CD8-positive, alpha-beta memory T cell (primary cell): ENCODE measurements at regions of chr14 and their contacts with region 1.

Region 1: GRCh38 chr14:64503478-64504309 is at the start of gene ZBTB25:
- DNase-seq: peak; percentile 98 to 99 (median 98)
- H3K4me3 ChIP-seq: peak within 1 kb of the TSS; percentile 82
- H3K4me3 Mint-ChIP-seq: peak within 1 kb of the TSS; percentile 94 to 99 (median 95)
- H3K27ac ChIP-seq: peak within 1 kb of the TSS; percentile 99
- H3K27ac Mint-ChIP-seq: peak within 1 kb of the TSS; percentile 97 to 100 (median 100)
- H3K4me1 ChIP-seq: peaks cover 58% of the 10 kb centered on the region
- H3K4me1 Mint-ChIP-seq: peaks cover 65 to 78% (median 68%) of the 10 kb centered on the region in 3 donors
- H3K27me3 ChIP-seq: no peaks in the 10 kb centered on the region
- H3K27me3 Mint-ChIP-seq: peaks cover 0 to 4% of the 10 kb centered on the region in 2 donors
- total RNA-seq, gene ZBTB25: 21.7 to 22.9 TPM

Region 2: GRCh38 chr14:63361790-63362189 is 1141.9 kb before region 1 on chr14:
- CTCF ChIA-PET with region 1: no interaction called
- POLR2A ChIA-PET with region 1: no interaction called
- DNase-seq: no peak
- H3K4me3 ChIP-seq: no peak overlapping the region
- H3K4me3 Mint-ChIP-seq: no peak overlapping the region
- H3K27ac ChIP-seq: no peak overlapping the region
- H3K27ac Mint-ChIP-seq: no peak overlapping the region
- H3K4me1 ChIP-seq: no peaks in the 10 kb centered on the region
- H3K4me1 Mint-ChIP-seq: no peaks in the 10 kb centered on the region
- H3K27me3 ChIP-seq: no peaks in the 10 kb centered on the region
- H3K27me3 Mint-ChIP-seq: peaks cover 3 to 9% of the 10 kb centered on the region in 2 donors

Region 3: GRCh38 chr14:63852817-63853731 is 650.6 kb before region 1 on chr14 and contains the start of gene SYNE2:
- CTCF ChIA-PET with region 1: no interaction called
- POLR2A ChIA-PET with region 1: interaction called, 18 read pairs
- DNase-seq: peak; percentile 75 to 85 (median 76)
- H3K4me3 ChIP-seq: peak within 1 kb of the TSS; percentile 82
- H3K4me3 Mint-ChIP-seq: peak within 1 kb of the TSS; percentile 93 to 100 (median 99)
- H3K27ac ChIP-seq: peak within 1 kb of the TSS; percentile 73
- H3K27ac Mint-ChIP-seq: peak within 1 kb of the TSS; percentile 92 to 99 (median 96)
- H3K4me1 ChIP-seq: peaks cover 43% of the 10 kb centered on the region
- H3K4me1 Mint-ChIP-seq: peaks cover 40 to 48% (median 41%) of the 10 kb centered on the region in 3 donors
- H3K27me3 ChIP-seq: no peaks in the 10 kb centered on the region
- H3K27me3 Mint-ChIP-seq: peaks cover 0 to 1% of the 10 kb centered on the region in 2 donors
- total RNA-seq, gene SYNE2: 45.2 to 45.6 TPM

Region 4: DNA sequence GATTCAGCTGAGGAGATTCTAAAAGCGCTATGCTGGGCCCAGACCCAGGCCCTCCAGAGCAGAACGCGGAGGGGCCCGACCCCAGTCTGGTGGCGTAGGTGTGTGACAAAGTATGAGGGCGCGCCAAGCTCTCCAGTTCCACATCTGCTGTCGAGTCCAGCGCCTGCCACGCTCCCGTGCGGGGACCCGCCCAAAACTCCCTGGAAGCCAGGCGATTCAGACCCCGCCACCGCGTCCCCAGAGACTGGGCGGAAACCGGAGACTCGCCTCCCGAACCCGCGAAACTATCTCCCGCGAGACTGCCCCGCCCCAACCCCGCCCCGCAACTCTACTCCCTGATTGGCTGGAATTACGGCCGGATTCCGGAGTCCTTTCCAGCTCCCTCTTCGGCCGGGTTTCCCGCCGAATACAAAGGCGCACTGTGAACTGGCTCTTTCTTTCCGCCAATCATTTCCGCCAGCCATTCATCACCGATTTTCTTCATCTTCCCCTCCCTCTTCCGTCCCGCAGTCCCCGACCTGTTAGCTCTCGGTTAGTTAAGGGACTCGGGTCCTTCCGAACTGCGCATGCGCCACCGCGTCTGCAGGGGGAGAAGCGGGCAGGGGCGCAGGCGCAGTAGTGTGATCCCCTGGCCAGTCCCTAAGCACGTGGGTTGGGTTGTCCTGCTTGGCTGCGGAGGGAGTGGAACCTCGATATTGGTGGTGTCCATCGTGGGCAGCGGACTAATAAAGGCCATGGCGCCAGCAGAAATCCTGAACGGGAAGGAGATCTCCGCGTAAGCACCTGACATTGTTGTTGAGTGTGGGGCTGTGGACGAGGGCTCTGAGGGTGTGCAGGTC is 115.8 kb before region 1 on chr14 and contains the start of gene MTHFD1:
- CTCF ChIA-PET with region 1: interaction called, 5 read pairs
- POLR2A ChIA-PET with region 1: interaction called, 12 read pairs
- DNase-seq: peak; percentile 93 to 98 (median 95)
- H3K4me3 ChIP-seq: peak within 1 kb of the TSS; percentile 96
- H3K4me3 Mint-ChIP-seq: peak within 1 kb of the TSS; percentile 93 to 97 (median 94)
- H3K27ac ChIP-seq: peak within 1 kb of the TSS; percentile 65
- H3K27ac Mint-ChIP-seq: peak within 1 kb of the TSS; percentile 76 to 97 (median 93)
- H3K4me1 ChIP-seq: peaks cover 18% of the 10 kb centered on the region
- H3K4me1 Mint-ChIP-seq: peaks cover 34 to 55% (median 53%) of the 10 kb centered on the region in 3 donors
- H3K27me3 ChIP-seq: no peaks in the 10 kb centered on the region
- H3K27me3 Mint-ChIP-seq: peaks cover 0 to 1% of the 10 kb centered on the region in 2 donors
- total RNA-seq, gene MTHFD1: 247 to 256 TPM

Region 5: DNA sequence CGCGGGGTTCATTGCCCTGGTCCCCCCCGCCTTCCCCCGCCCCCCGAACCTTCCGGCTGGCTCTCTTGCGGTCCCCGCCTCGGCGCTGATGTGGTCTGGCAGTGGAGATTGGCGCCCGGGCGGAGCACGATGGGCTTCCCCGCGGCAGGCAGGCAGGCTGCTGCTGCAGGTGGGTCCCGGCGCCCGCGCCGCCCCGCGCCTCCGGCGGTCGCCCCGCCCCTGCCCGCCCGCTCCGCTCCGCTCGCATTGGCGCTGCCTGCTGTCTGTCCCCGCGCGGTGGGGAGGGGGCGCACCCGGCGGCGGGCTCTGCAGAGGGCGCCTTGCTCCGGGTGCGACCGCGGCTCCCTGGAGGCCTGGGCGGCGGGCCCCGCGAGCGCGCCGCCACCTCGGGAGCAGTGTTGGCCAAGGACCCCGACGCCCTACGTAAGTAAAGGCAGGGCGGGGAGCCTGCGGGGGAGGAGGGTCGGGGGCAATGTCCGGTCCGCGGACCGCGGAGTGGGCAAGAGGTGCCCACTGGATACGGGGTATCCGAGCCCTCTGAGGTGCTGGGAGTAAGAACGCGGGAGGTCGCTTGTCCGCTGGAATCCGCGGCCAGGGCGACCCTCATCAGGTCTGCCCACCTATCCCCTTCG is 38.4 kb before region 1 on chr14 and contains the start of gene AKAP5:
- CTCF ChIA-PET with region 1: no interaction called
- POLR2A ChIA-PET with region 1: interaction called, 15 read pairs
- DNase-seq: peak; percentile 62 to 78 (median 66)
- H3K4me3 ChIP-seq: peak within 1 kb of the TSS; percentile 49
- H3K4me3 Mint-ChIP-seq: peak within 1 kb of the TSS; percentile 88 to 96 (median 91)
- H3K27ac ChIP-seq: no peak within 1 kb of the TSS
- H3K27ac Mint-ChIP-seq: peak within 1 kb of the TSS; percentile 46 to 92 (median 86)
- H3K4me1 ChIP-seq: peaks cover 10% of the 10 kb centered on the region
- H3K4me1 Mint-ChIP-seq: peaks cover 31 to 56% (median 51%) of the 10 kb centered on the region in 3 donors
- H3K27me3 ChIP-seq: no peaks in the 10 kb centered on the region
- H3K27me3 Mint-ChIP-seq: no peaks in the 10 kb centered on the region
- total RNA-seq, gene AKAP5: 3.1 to 3.6 TPM

Region 6: GRCh38 chr14:64540208-64541157 is 36.8 kb after region 1 on chr14 and contains the start of gene HSPA2:
- CTCF ChIA-PET with region 1: interaction called, 11 read pairs
- POLR2A ChIA-PET with region 1: interaction called, 4 read pairs
- DNase-seq: peak; percentile 89 to 94 (median 90)
- H3K4me3 ChIP-seq: peak within 1 kb of the TSS; percentile 92
- H3K4me3 Mint-ChIP-seq: peak within 1 kb of the TSS; percentile 92 to 99 (median 95)
- H3K27ac ChIP-seq: no peak within 1 kb of the TSS
- H3K27ac Mint-ChIP-seq: peak within 1 kb of the TSS; percentile 59 to 94 (median 87)
- H3K4me1 ChIP-seq: peaks cover 18% of the 10 kb centered on the region
- H3K4me1 Mint-ChIP-seq: peaks cover 26 to 39% (median 37%) of the 10 kb centered on the region in 3 donors
- H3K27me3 ChIP-seq: no peaks in the 10 kb centered on the region
- H3K27me3 Mint-ChIP-seq: peaks cover 0 to 6% of the 10 kb centered on the region in 2 donors
- total RNA-seq, gene HSPA2: 1.9 TPM

Region 7: GRCh38 chr14:64573109-64573508 is 69.4 kb after region 1 on chr14:
- CTCF ChIA-PET with region 1: no interaction called
- POLR2A ChIA-PET with region 1: no interaction called
- DNase-seq: no peak
- H3K4me3 ChIP-seq: no peak overlapping the region
- H3K4me3 Mint-ChIP-seq: no peak overlapping the region
- H3K27ac ChIP-seq: no peak overlapping the region
- H3K27ac Mint-ChIP-seq: no peak overlapping the region
- H3K4me1 ChIP-seq: no peaks in the 10 kb centered on the region
- H3K4me1 Mint-ChIP-seq: no peaks in the 10 kb centered on the region
- H3K27me3 ChIP-seq: no peaks in the 10 kb centered on the region
- H3K27me3 Mint-ChIP-seq: peaks cover 0 to 13% of the 10 kb centered on the region in 2 donors